ENCODE measurements at regions of chr19 and their contacts with region 1.

Region 1: GRCh38 chr19:55319785-55320184 is 5.4 kb downstream of the TMEM150B start:
- DNase-seq: no peak

Region 2: DNA sequence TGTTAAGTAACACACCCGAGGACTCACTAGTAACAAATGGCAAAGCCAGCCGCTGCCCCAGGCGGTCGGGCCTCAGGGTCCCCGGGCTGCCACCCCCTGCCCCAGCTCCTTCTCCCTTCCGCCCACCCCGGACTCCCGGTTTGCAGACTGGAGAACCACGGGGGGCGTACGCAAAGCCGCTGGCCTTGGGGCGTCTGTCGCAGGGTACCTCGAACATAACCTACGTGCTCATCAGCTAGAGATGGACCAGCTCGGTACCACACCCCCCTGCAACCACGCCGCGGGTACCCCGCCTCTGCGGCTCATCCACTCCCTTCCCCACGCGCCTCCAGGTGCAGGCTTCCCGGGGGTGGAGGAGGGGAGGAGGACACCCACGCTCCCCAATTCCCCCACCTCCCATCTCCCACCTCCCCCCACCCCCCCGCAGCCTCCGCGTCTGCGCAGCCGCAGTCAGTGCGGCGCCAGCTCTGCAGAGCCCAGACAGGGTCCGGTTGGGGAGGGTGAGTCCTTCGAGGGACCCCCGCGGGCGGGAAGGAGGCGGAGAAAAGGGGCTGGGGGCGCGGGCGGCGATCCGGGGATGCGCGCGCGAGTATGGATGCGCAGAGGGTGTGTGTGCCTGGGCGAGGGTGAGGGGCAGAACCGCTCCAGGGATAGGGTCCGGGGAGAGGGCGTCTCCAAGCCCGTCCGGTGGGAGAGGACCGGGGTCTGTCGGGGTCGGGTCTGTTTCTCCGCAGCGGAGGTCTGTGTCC is 1323.1 kb after region 1 on chr19 and contains the start of gene SMIM17:
- intact Hi-C with region 1: loop called in 1 of 2 experiments (anchors 5 kb)
- DNase-seq: no peak
- total RNA-seq, gene SMIM17: 0.71 to 0.74 TPM

Measured in posterior vena cava (tissue), 2 donors.